Common myeloid progenitor, CD34-positive (primary cell): ENCODE measurements at regions of chr20 and their contacts with region 1.

Region 1: GRCh38 chr20:61230166-61230565 is 21.9 kb upstream of the CDH4 start:
- DNase-seq: no peak
- H3K4me3 ChIP-seq: no peak overlapping the region
- H3K27ac ChIP-seq: no peak overlapping the region
- H3K4me1 ChIP-seq: no peaks in the 10 kb centered on the region
- H3K27me3 ChIP-seq: peaks cover 0 to 14% (median 1%) of the 10 kb centered on the region in 5 experiments

Region 2: DNA sequence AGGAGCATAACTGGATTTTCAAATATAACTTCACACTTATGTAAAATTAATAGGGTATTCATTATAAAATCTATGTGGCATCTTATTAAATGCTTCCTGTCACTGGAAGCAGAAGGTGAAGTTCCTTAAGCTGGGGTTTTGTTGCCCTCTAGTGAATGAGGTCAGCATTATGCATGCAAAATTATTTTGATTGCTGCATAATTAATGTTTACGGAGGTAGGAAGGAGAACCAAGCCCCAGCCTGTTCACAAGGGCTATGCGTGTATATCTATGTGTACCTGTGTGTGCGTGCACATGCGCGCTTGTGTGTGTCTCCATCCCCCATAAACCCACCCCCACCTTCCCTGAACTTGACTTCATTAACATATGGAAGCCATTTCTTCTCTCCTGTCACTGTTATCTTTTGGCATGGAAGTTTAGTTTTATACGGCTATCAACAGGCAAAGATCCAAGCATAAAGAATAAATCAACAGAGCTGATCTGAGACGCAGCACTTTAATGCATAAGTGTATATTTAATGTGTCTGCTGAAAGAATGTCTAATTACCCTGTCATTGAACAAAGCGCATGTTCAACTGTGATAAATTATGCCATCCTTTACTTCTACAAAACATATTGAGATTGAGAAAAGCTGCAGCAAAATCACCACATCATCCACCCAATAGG is 68.3 kb before region 1 on chr20:
- CTCF ChIA-PET with region 1: no interaction called
- POLR2A ChIA-PET with region 1: no interaction called
- DNase-seq: peak; percentile 9 to 49 (median 21)
- H3K4me3 ChIP-seq: no peak overlapping the region
- H3K27ac ChIP-seq: no peak overlapping the region
- H3K4me1 ChIP-seq: peaks cover 0 to 21% (median 0%) of the 10 kb centered on the region in 4 experiments
- H3K27me3 ChIP-seq: no peaks in the 10 kb centered on the region

Region 3: DNA sequence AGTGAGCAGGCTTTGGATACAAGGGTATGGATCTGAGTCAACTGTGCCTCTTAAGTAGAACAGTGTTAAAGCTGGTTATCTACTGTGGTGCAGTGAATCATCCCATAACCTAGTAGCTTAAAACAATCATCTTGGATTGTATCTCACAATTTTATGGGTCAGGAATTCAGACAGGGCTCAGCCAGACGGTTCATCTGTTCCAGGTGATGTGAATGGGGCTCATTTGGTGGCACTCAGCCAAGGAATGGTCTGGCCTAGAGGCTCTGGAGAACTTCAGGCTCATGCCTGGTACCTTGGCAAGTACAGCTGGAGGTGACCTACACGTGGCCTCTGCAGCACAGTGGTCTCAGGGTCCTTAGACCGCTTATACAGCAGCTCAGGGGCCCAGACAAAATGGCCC is 10.6 kb after region 1 on chr20:
- CTCF ChIA-PET with region 1: interaction called, 11 read pairs
- POLR2A ChIA-PET with region 1: no interaction called
- DNase-seq: no peak
- H3K4me3 ChIP-seq: no peak overlapping the region
- H3K27ac ChIP-seq: no peak overlapping the region
- H3K4me1 ChIP-seq: no peaks in the 10 kb centered on the region
- H3K27me3 ChIP-seq: peaks cover 0 to 22% (median 3%) of the 10 kb centered on the region in 5 experiments